Sigmoid colon (tissue), 7 donors: ENCODE measurements at regions of chr22 and their contacts with region 1.

Region 1: GRCh38 chr22:29267858-29268417 is at the starts of genes EWSR1 and RHBDD3:
- DNase-seq: peak; percentile 98
- H3K4me3 ChIP-seq: peak within 1 kb of the TSS; percentile 72 to 80 (median 76)
- H3K27ac ChIP-seq: peak within 1 kb of the TSS; percentile 94 to 100 (median 96)
- H3K4me1 ChIP-seq: peaks cover 0 to 59% (median 51%) of the 10 kb centered on the region in 4 donors
- H3K27me3 ChIP-seq: no peaks in the 10 kb centered on the region
- CTCF ChIP-seq: no peak
- EP300 ChIP-seq: no peak
- POLR2A ChIP-seq: peak; percentile 77 to 79
- total RNA-seq, gene EWSR1: 170 to 233 (median 177) TPM
- total RNA-seq, gene RHBDD3: 16.1 to 20.5 (median 18.0) TPM

Region 2: DNA sequence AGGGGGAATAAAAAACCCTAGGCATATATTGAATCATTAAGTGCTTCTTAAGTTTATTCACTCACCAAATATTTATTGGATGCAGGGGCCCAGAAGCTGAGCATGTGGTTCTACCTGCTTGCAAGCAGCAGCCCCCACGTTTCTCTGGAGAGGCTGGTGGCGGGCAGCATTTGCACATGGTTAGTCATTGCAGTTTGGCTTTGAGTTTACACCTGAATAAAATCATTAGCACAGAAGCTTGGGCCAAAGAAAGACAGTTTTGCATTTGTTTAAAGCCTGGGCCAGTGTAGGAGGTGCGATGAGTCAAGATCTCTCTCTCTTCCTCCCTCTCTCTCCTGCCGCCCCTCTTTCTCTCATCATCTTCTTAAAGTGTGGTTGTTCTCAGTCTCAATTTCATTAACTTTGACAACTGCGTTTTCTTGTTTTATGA is 278.9 kb before region 1 on chr22:
- intact Hi-C with region 1: no loop called
- DNase-seq: no peak
- H3K4me3 ChIP-seq: no peak overlapping the region
- H3K27ac ChIP-seq: peak overlapping the region; percentile 55 to 68 (median 62)
- H3K4me1 ChIP-seq: peaks cover 0 to 36% (median 27%) of the 10 kb centered on the region in 4 donors
- H3K27me3 ChIP-seq: no peaks in the 10 kb centered on the region
- CTCF ChIP-seq: no peak
- EP300 ChIP-seq: no peak
- POLR2A ChIP-seq: no peak

Region 3: DNA sequence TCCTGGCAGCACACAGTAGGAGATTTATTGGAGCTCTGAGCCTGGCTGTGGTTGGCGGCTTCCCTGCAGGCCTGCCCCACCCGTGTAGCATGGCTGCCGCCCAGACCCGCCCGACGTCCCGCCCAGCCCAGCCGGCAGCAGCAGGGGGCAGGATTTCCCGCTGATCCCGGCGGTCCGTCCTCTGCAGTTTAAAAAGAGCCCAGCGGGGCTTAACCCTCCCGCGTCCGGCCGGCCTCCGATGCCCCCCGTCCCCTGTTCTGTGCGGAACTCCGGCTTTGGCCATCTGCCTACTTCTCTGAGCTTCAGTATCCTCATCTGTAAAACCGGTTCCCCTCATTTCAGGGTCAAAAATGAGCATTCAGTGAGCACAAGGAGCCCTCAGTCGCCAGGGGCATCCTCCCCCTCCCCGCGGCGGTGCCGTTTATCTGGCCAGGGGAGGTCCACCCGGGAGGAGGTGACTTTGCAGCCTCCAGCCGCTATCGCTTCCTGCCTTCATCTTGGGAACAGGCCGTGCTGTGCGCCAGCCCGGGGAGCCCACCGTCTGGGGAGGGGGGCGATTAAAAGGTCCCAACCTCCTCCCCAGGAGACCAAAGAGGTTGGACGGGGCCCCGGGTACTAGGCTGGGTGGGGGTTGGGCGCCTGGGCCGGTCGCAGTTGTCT is 38.4 kb after region 1 on chr22 and contains the start of gene GAS2L1:
- intact Hi-C with region 1: loop called (anchors 2 kb)
- DNase-seq: peak; percentile 94
- H3K4me3 ChIP-seq: peak within 1 kb of the TSS; percentile 65 to 94 (median 87)
- H3K27ac ChIP-seq: peak within 1 kb of the TSS; percentile 86 to 94 (median 88)
- H3K4me1 ChIP-seq: peaks cover 0 to 65% (median 47%) of the 10 kb centered on the region in 4 donors
- H3K27me3 ChIP-seq: no peaks in the 10 kb centered on the region
- CTCF ChIP-seq: peak; percentile 57 to 81 (median 77)
- EP300 ChIP-seq: no peak
- POLR2A ChIP-seq: no peak
- total RNA-seq, gene GAS2L1: 14.0 to 25.2 (median 19.3) TPM